CD8-positive, alpha-beta T cell (primary cell): ENCODE measurements at regions of chr15 and their contacts with region 1.

Region 1: GRCh38 chr15:66497502-66498455 is at the start of gene SNAPC5:
- DNase-seq: peak; percentile 95 to 99 (median 97)
- ATAC-seq: peak; percentile 94
- H3K4me3 ChIP-seq: peak within 1 kb of the TSS; percentile 89 to 98
- H3K4me3 Mint-ChIP-seq: peak within 1 kb of the TSS; percentile 96
- H3K27ac ChIP-seq: peak within 1 kb of the TSS; percentile 93 to 96
- H3K27ac Mint-ChIP-seq: peak within 1 kb of the TSS; percentile 97
- H3K4me1 ChIP-seq: peaks cover 32% of the 10 kb centered on the region
- H3K4me1 Mint-ChIP-seq: peaks cover 57% of the 10 kb centered on the region
- H3K27me3 ChIP-seq: no peaks in the 10 kb centered on the region
- H3K27me3 Mint-ChIP-seq: no peaks in the 10 kb centered on the region
- CTCF ChIP-seq: peak; percentile 98
- total RNA-seq, gene SNAPC5: 22.3 to 25.3 TPM

Region 2: GRCh38 chr15:65133548-65134200 is 1364.1 kb before region 1 on chr15 and contains the start of gene PDCD7:
- CTCF ChIA-PET with region 1: no interaction called
- POLR2A ChIA-PET with region 1: no interaction called
- intact Hi-C with region 1: loop called in 1 of 2 experiments (anchors 5 kb)
- DNase-seq: peak; percentile 60 to 95 (median 86)
- ATAC-seq: peak; percentile 93
- H3K4me3 ChIP-seq: peak within 1 kb of the TSS; percentile 62 to 78
- H3K4me3 Mint-ChIP-seq: peak within 1 kb of the TSS; percentile 91
- H3K27ac ChIP-seq: peak within 1 kb of the TSS; percentile 80 to 83
- H3K27ac Mint-ChIP-seq: peak within 1 kb of the TSS; percentile 96
- H3K4me1 ChIP-seq: peaks cover 26% of the 10 kb centered on the region
- H3K4me1 Mint-ChIP-seq: peaks cover 31% of the 10 kb centered on the region
- H3K27me3 ChIP-seq: no peaks in the 10 kb centered on the region
- H3K27me3 Mint-ChIP-seq: no peaks in the 10 kb centered on the region
- CTCF ChIP-seq: no peak
- total RNA-seq, gene PDCD7: 20.7 to 21.7 TPM

Region 3: GRCh38 chr15:66169023-66169422 is 328.8 kb before region 1 on chr15:
- CTCF ChIA-PET with region 1: no interaction called
- POLR2A ChIA-PET with region 1: no interaction called
- intact Hi-C with region 1: no loop called
- DNase-seq: peak in 1 of 9 experiments; percentile 13
- ATAC-seq: no peak
- H3K4me3 ChIP-seq: no peak overlapping the region
- H3K4me3 Mint-ChIP-seq: no peak overlapping the region
- H3K27ac ChIP-seq: no peak overlapping the region
- H3K27ac Mint-ChIP-seq: no peak overlapping the region
- H3K4me1 ChIP-seq: no peaks in the 10 kb centered on the region
- H3K4me1 Mint-ChIP-seq: no peaks in the 10 kb centered on the region
- H3K27me3 ChIP-seq: no peaks in the 10 kb centered on the region
- H3K27me3 Mint-ChIP-seq: peaks cover 11% of the 10 kb centered on the region
- CTCF ChIP-seq: no peak

Region 4: GRCh38 chr15:66293419-66294156 is 204.2 kb before region 1 on chr15 and contains the start of gene DIS3L:
- CTCF ChIA-PET with region 1: interaction called, 4 read pairs
- POLR2A ChIA-PET with region 1: interaction called, 3 read pairs
- intact Hi-C with region 1: loop called in 1 of 2 experiments (anchors 2 kb)
- DNase-seq: peak; percentile 21 to 83 (median 60)
- ATAC-seq: peak; percentile 72
- H3K4me3 ChIP-seq: peak within 1 kb of the TSS; percentile 67 to 72
- H3K4me3 Mint-ChIP-seq: peak within 1 kb of the TSS; percentile 86
- H3K27ac ChIP-seq: peak within 1 kb of the TSS; percentile 86 to 95
- H3K27ac Mint-ChIP-seq: peak within 1 kb of the TSS; percentile 93
- H3K4me1 ChIP-seq: peaks cover 39% of the 10 kb centered on the region
- H3K4me1 Mint-ChIP-seq: peaks cover 49% of the 10 kb centered on the region
- H3K27me3 ChIP-seq: no peaks in the 10 kb centered on the region
- H3K27me3 Mint-ChIP-seq: no peaks in the 10 kb centered on the region
- CTCF ChIP-seq: no peak
- total RNA-seq, gene DIS3L: 16.6 to 18.8 TPM

Region 5: DNA sequence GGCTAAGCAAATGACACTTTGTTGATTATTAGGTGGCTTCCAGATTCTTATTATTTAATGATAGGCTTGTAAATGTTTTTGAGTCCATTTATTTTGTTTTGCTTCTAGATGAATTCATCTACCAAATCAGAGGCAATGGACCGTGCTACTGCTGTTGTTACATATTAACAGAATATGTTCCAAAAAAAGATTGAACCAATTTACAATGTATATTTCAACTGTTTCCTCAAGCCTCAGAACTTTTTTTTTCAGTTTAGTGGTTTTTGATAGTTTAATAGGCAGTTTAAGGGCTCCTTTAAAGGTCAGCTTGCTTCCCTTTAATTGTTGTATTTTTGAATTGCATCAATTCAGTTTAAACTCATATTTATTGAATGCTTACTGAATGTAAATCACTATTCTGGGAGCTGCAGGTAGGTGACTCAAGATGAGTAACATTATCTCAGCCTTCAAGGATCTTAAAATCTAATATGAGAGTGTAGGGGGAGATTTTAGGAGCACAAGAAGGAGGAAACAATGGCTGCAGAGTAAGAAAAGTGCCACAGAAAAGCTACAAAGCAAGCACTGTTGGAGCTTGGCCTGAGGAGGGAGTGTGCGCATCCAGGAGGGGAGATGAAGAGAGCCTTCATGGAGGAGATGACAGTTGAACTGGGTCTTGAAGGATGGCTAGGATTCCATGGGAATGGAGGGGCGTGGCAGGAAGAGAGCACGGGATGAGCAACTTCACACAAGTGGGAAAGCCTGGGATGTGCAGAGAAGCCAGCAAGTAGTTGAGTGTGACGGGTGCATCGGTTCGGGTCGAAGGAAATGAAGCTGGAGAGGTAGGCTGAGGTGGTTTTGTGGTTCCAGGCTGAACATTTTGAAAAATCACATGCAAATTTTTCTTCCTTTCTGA is 96.4 kb before region 1 on chr15:
- CTCF ChIA-PET with region 1: interaction called, 12 read pairs
- POLR2A ChIA-PET with region 1: interaction called, 3 read pairs
- intact Hi-C with region 1: no loop called
- DNase-seq: peak in 4 of 9 experiments; percentile 5 to 36 (median 14)
- ATAC-seq: peak; percentile 40
- H3K4me3 ChIP-seq: no peak overlapping the region
- H3K4me3 Mint-ChIP-seq: peak overlapping the region; percentile 77
- H3K27ac ChIP-seq: no peak overlapping the region
- H3K27ac Mint-ChIP-seq: peak overlapping the region; percentile 88
- H3K4me1 ChIP-seq: peaks cover 62% of the 10 kb centered on the region
- H3K4me1 Mint-ChIP-seq: peaks cover 73% of the 10 kb centered on the region
- H3K27me3 ChIP-seq: no peaks in the 10 kb centered on the region
- H3K27me3 Mint-ChIP-seq: no peaks in the 10 kb centered on the region
- CTCF ChIP-seq: no peak

Region 6: GRCh38 chr15:66483131-66483566 is 14.6 kb before region 1 on chr15:
- CTCF ChIA-PET with region 1: interaction called, 16 read pairs
- POLR2A ChIA-PET with region 1: no interaction called
- intact Hi-C with region 1: no loop called
- DNase-seq: no peak
- ATAC-seq: no peak
- H3K4me3 ChIP-seq: no peak overlapping the region
- H3K4me3 Mint-ChIP-seq: no peak overlapping the region
- H3K27ac ChIP-seq: no peak overlapping the region
- H3K27ac Mint-ChIP-seq: no peak overlapping the region
- H3K4me1 ChIP-seq: no peaks in the 10 kb centered on the region
- H3K4me1 Mint-ChIP-seq: no peaks in the 10 kb centered on the region
- H3K27me3 ChIP-seq: no peaks in the 10 kb centered on the region
- H3K27me3 Mint-ChIP-seq: no peaks in the 10 kb centered on the region
- CTCF ChIP-seq: no peak

Region 7: GRCh38 chr15:68418611-68419161 is 1920.9 kb after region 1 on chr15:
- CTCF ChIA-PET with region 1: no interaction called
- POLR2A ChIA-PET with region 1: no interaction called
- intact Hi-C with region 1: no loop called
- DNase-seq: no peak
- ATAC-seq: no peak
- H3K4me3 ChIP-seq: no peak overlapping the region
- H3K4me3 Mint-ChIP-seq: no peak overlapping the region
- H3K27ac ChIP-seq: no peak overlapping the region
- H3K27ac Mint-ChIP-seq: no peak overlapping the region
- H3K4me1 ChIP-seq: no peaks in the 10 kb centered on the region
- H3K4me1 Mint-ChIP-seq: no peaks in the 10 kb centered on the region
- H3K27me3 ChIP-seq: no peaks in the 10 kb centered on the region
- H3K27me3 Mint-ChIP-seq: no peaks in the 10 kb centered on the region
- CTCF ChIP-seq: no peak